ENCODE measurements at regions of chr3 and their contacts with region 1.

Region 1: GRCh38 chr3:100032243-100032642 is 82.1 kb downstream of the FILIP1L start:
- DNase-seq: no peak
- H3K4me3 ChIP-seq: no peak overlapping the region
- H3K4me3 Mint-ChIP-seq: no peak overlapping the region
- H3K27ac Mint-ChIP-seq: no peak overlapping the region
- H3K4me1 ChIP-seq: peaks cover 94% of the 10 kb centered on the region
- H3K4me1 Mint-ChIP-seq: peaks cover 34% of the 10 kb centered on the region
- H3K27me3 ChIP-seq: no peaks in the 10 kb centered on the region
- H3K27me3 Mint-ChIP-seq: no peaks in the 10 kb centered on the region
- CTCF ChIP-seq: no peak

Region 2: GRCh38 chr3:99875929-99876841 is 156.1 kb before region 1 on chr3:
- CTCF ChIA-PET with region 1: no interaction called
- POLR2A ChIA-PET with region 1: interaction called, 5 read pairs
- intact Hi-C with region 1: loop called (anchors 1 kb)
- DNase-seq: peak; percentile 82 to 90
- H3K4me3 ChIP-seq: peak overlapping the region; percentile 67
- H3K4me3 Mint-ChIP-seq: peak overlapping the region; percentile 82
- H3K27ac Mint-ChIP-seq: peak overlapping the region; percentile 89
- H3K4me1 ChIP-seq: peaks cover 38% of the 10 kb centered on the region
- H3K4me1 Mint-ChIP-seq: peaks cover 12% of the 10 kb centered on the region
- H3K27me3 ChIP-seq: no peaks in the 10 kb centered on the region
- H3K27me3 Mint-ChIP-seq: no peaks in the 10 kb centered on the region
- CTCF ChIP-seq: peak; percentile 0 to 16

Region 3: GRCh38 chr3:99929745-99930139 is 102.5 kb before region 1 on chr3:
- CTCF ChIA-PET with region 1: no interaction called
- POLR2A ChIA-PET with region 1: no interaction called
- intact Hi-C with region 1: loop called (anchors 1 kb)
- DNase-seq: no peak
- H3K4me3 ChIP-seq: no peak overlapping the region
- H3K4me3 Mint-ChIP-seq: no peak overlapping the region
- H3K27ac Mint-ChIP-seq: no peak overlapping the region
- H3K4me1 ChIP-seq: peaks cover 42% of the 10 kb centered on the region
- H3K4me1 Mint-ChIP-seq: peaks cover 20% of the 10 kb centered on the region
- H3K27me3 ChIP-seq: no peaks in the 10 kb centered on the region
- H3K27me3 Mint-ChIP-seq: no peaks in the 10 kb centered on the region
- CTCF ChIP-seq: no peak

Region 4: DNA sequence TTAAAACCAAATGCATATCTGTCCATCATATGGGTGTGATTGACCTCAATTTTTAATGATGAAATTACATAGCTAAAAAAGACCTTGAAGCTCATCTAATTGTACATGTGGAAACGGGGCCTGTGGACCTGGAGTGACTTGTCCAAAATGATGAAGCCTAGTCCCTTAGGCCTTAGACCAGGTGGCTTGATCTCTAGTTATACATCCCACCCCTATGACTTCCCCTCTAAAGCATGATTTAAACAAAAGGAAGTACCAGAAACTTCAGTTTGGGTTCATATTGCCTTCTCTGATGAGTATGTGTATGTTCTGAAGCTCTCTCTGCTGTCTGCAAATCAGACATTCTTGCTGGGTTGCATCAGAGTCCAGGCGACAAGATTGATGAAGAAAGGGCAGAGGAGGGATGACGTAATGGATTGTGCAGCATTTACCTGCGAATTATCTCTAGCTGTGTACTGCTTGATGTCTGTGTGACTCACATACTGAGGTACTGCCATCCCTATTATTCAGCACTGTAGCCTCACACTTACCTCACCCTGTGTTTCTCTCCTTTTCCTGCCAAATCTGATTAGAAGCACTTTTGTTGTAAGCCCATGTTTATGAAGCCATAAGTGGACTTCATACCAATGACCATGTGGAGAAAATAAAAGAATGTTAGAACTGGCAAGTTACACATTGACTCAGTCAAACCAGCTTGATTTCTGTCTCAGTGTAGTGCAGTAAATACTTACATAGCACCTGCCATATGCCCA is 29.5 kb before region 1 on chr3:
- CTCF ChIA-PET with region 1: no interaction called
- POLR2A ChIA-PET with region 1: no interaction called
- intact Hi-C with region 1: loop called (anchors 2 kb)
- DNase-seq: peak; percentile 81 to 85
- H3K4me3 ChIP-seq: no peak overlapping the region
- H3K4me3 Mint-ChIP-seq: no peak overlapping the region
- H3K27ac Mint-ChIP-seq: peak overlapping the region; percentile 84
- H3K4me1 ChIP-seq: peaks cover 44% of the 10 kb centered on the region
- H3K4me1 Mint-ChIP-seq: peaks cover 42% of the 10 kb centered on the region
- H3K27me3 ChIP-seq: no peaks in the 10 kb centered on the region
- H3K27me3 Mint-ChIP-seq: no peaks in the 10 kb centered on the region
- CTCF ChIP-seq: no peak

Region 5: GRCh38 chr3:100047455-100048141 is 15.4 kb after region 1 on chr3:
- CTCF ChIA-PET with region 1: interaction called, 3 read pairs
- POLR2A ChIA-PET with region 1: no interaction called
- intact Hi-C with region 1: loop called (anchors 1 kb)
- DNase-seq: peak; percentile 69 to 74
- H3K4me3 ChIP-seq: no peak overlapping the region
- H3K4me3 Mint-ChIP-seq: peak overlapping the region; percentile 35
- H3K27ac Mint-ChIP-seq: peak overlapping the region; percentile 86
- H3K4me1 ChIP-seq: peaks cover 72% of the 10 kb centered on the region
- H3K4me1 Mint-ChIP-seq: peaks cover 43% of the 10 kb centered on the region
- H3K27me3 ChIP-seq: no peaks in the 10 kb centered on the region
- H3K27me3 Mint-ChIP-seq: no peaks in the 10 kb centered on the region
- CTCF ChIP-seq: no peak

Region 6: GRCh38 chr3:100076731-100077529 is 44.7 kb after region 1 on chr3:
- CTCF ChIA-PET with region 1: interaction called, 8 read pairs
- POLR2A ChIA-PET with region 1: interaction called, 4 read pairs
- intact Hi-C with region 1: loop called (anchors 1 kb)
- DNase-seq: peak; percentile 53
- H3K4me3 ChIP-seq: peak overlapping the region; percentile 31
- H3K4me3 Mint-ChIP-seq: peak overlapping the region; percentile 69
- H3K27ac Mint-ChIP-seq: peak overlapping the region; percentile 73
- H3K4me1 ChIP-seq: peaks cover 53% of the 10 kb centered on the region
- H3K4me1 Mint-ChIP-seq: peaks cover 54% of the 10 kb centered on the region
- H3K27me3 ChIP-seq: no peaks in the 10 kb centered on the region
- H3K27me3 Mint-ChIP-seq: no peaks in the 10 kb centered on the region
- CTCF ChIP-seq: no peak